ENCODE measurements at regions of chr6 and their contacts with region 1.

Region 1: GRCh38 chr6:135280375-135281136 is 99.4 kb downstream of the MYB start:
- DNase-seq: peak; percentile 94 to 98 (median 98)
- H3K4me3 ChIP-seq: peak overlapping the region in 3 of 7 experiments; percentile 15 to 62 (median 48)
- H3K27ac ChIP-seq: peak overlapping the region; percentile 51 to 68
- H3K4me1 ChIP-seq: peaks cover 29 to 61% (median 42%) of the 10 kb centered on the region in 4 experiments
- H3K27me3 ChIP-seq: no peaks in the 10 kb centered on the region

Region 2: GRCh38 chr6:135261872-135262725 is 18.5 kb before region 1 on chr6:
- CTCF ChIA-PET with region 1: interaction called, 17 read pairs
- POLR2A ChIA-PET with region 1: interaction called, 4 read pairs
- DNase-seq: peak; percentile 58 to 81 (median 72)
- H3K4me3 ChIP-seq: peak overlapping the region in 1 of 7 experiments; percentile 5
- H3K27ac ChIP-seq: peak overlapping the region in 1 of 2 experiments; percentile 26
- H3K4me1 ChIP-seq: peaks cover 0 to 33% (median 14%) of the 10 kb centered on the region in 4 experiments
- H3K27me3 ChIP-seq: no peaks in the 10 kb centered on the region

Region 3: DNA sequence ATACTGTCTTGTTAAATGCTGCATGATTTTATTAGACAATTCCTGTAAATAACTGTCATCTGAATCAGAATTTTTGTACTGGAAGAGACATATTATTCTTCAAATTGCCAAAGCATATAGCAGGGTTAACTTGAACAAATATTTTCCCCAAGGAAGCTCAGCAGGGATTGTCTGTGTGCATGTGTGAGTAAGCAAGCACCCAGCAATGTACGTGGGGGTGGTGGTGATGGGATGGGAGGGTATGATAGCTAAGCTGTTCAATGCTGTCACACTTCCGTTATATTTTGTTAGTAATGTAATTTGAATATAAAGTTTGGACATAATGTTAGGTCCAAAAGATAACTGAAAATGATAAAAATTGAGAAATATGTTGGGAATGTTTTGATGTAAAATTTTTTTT is 18.7 kb after region 1 on chr6:
- CTCF ChIA-PET with region 1: no interaction called
- POLR2A ChIA-PET with region 1: no interaction called
- DNase-seq: no peak
- H3K4me3 ChIP-seq: no peak overlapping the region
- H3K27ac ChIP-seq: no peak overlapping the region
- H3K4me1 ChIP-seq: peaks cover 5 to 13% (median 6%) of the 10 kb centered on the region in 4 experiments
- H3K27me3 ChIP-seq: no peaks in the 10 kb centered on the region

Region 4: DNA sequence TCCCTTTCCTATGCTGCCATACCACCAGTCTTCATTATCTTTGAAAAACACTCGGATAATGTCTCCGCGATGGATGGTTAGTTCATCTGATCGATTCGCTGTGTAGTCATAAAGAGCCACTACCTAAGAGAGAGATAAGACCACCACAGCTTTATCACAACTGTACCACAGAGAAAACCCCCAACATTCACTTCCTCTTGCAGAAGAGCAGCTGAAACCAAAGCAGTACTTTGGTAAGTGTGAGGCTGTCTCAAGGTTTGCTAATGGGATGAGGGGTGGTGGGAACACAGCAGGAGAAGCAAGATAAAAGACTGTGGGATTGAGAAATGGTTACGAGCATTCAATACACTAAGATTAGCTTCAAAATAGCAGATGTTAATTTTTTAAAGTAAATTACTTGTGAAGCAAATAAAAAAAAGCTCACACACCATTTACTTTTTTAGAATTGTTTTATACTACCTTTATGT is 42.7 kb after region 1 on chr6:
- CTCF ChIA-PET with region 1: interaction called, 18 read pairs
- POLR2A ChIA-PET with region 1: interaction called, 14 read pairs
- DNase-seq: peak; percentile 96 to 99 (median 98)
- H3K4me3 ChIP-seq: peak overlapping the region in 4 of 7 experiments; percentile 33 to 49 (median 43)
- H3K27ac ChIP-seq: peak overlapping the region; percentile 86 to 89
- H3K4me1 ChIP-seq: peaks cover 41 to 84% (median 66%) of the 10 kb centered on the region in 4 experiments
- H3K27me3 ChIP-seq: no peaks in the 10 kb centered on the region

Measured in common myeloid progenitor, CD34-positive (primary cell).